ENCODE measurements at regions of chr10 and their contacts with region 1.

Region 1: GRCh38 chr10:78579995-78580394 is 488.8 kb upstream of the ZMIZ1 start:
- DNase-seq: no peak
- H3K4me3 Mint-ChIP-seq: no peak overlapping the region
- H3K27ac Mint-ChIP-seq: peak overlapping the region; percentile 92
- H3K4me1 Mint-ChIP-seq: peaks cover 17% of the 10 kb centered on the region
- H3K27me3 Mint-ChIP-seq: no peaks in the 10 kb centered on the region

Region 2: GRCh38 chr10:78029269-78030226 is 550.4 kb before region 1 on chr10 and contains the start of gene POLR3A:
- intact Hi-C with region 1: loop called (anchors 2 kb)
- DNase-seq: peak; percentile 89
- H3K4me3 Mint-ChIP-seq: peak within 1 kb of the TSS; percentile 99
- H3K27ac Mint-ChIP-seq: peak within 1 kb of the TSS; percentile 91
- H3K4me1 Mint-ChIP-seq: peaks cover 28% of the 10 kb centered on the region
- H3K27me3 Mint-ChIP-seq: no peaks in the 10 kb centered on the region
- total RNA-seq, gene POLR3A: 29.5 and 30.8 TPM in 2 replicates

Region 3: DNA sequence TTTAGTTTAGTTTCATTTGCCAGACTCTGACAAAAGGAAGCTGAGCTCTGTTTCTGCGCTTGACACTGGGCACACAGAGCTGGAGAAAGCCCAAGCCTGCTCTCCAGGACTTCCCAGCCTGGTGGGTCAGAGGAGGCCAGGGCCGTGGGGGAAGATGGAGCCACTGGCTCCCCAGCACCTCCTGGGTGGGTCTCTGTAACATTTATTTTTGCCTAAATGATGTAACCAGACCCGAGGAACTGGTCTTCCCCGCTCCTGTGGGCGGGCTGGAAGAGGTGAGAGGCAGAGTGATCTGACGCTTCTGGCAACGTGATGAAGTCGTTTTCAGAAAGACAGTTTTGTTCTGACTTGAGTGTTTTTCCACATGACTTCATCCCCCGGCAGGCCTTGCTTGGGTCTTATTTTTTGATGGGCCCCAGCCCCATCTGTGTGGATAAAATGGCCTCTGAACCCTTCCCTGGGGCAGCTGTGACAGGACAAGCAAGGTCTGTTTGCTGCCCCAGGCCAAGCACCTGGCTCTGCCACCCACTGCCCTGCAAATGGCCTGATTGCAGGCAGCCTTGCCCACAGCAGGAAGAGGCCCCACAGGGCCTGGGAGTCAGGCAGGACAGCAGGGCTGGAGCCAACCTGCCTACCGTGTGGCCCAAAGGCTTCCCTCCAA is 183.8 kb after region 1 on chr10:
- intact Hi-C with region 1: loop called (anchors 10 kb)
- DNase-seq: no peak
- H3K4me3 Mint-ChIP-seq: peak overlapping the region; percentile 3
- H3K27ac Mint-ChIP-seq: peak overlapping the region; percentile 85
- H3K4me1 Mint-ChIP-seq: peaks cover 27% of the 10 kb centered on the region
- H3K27me3 Mint-ChIP-seq: no peaks in the 10 kb centered on the region